ENCODE measurements at regions of chr15 and their contacts with region 1.

Region 1: GRCh38 chr15:81117136-81117535 is 16.9 kb upstream of the CFAP161 start:
- DNase-seq: no peak
- ATAC-seq: no peak
- H3K4me3 Mint-ChIP-seq: no peak overlapping the region
- H3K27ac Mint-ChIP-seq: no peak overlapping the region
- H3K4me1 Mint-ChIP-seq: no peaks in the 10 kb centered on the region
- H3K27me3 Mint-ChIP-seq: peaks cover 57% of the 10 kb centered on the region

Region 2: DNA sequence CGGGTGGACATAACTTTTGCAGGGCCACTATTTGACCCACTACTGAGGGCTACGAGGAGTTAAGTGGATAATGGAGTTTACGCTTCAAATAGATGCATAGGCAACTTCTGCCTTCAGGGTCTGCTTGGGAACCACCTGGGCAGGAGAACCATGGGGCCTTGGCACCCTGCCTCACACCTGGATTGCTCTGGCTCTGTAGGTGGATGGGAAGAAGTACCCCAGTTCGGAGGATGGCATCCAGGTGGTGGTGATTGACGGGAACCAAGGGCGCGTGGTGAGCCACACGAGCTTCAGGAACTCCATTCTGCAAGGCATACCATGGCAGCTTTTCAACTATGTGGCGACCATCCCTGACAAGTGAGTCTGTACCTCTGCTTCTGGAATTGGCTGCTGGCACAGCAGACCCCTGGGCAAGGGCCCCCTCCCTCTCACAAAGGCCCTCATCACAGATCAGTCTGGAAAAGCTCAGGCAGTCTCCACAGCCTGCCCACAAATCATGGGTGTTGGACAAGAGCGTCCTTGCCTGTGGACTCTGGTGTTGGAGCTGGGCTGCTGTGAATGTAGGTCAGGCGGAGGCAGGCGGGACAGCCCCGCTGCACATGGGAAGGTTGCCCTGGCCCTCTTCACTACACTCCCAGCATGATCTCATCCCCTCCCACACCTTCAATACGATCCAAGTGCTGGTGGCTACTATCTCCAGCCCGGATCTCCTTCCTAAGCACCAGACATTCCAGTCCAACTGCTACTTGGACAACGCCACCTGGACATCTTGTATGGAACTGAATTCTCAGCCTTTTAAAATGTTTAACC is 174.2 kb before region 1 on chr15:
- CTCF ChIA-PET with region 1: no interaction called
- DNase-seq: no peak
- ATAC-seq: no peak
- H3K4me3 Mint-ChIP-seq: no peak overlapping the region
- H3K27ac Mint-ChIP-seq: no peak overlapping the region
- H3K4me1 Mint-ChIP-seq: no peaks in the 10 kb centered on the region
- H3K27me3 Mint-ChIP-seq: no peaks in the 10 kb centered on the region

Region 3: GRCh38 chr15:81106560-81106959 is 10.6 kb before region 1 on chr15:
- CTCF ChIA-PET with region 1: interaction called, 10 read pairs
- DNase-seq: peak; percentile 57
- ATAC-seq: peak; percentile 51
- H3K4me3 Mint-ChIP-seq: no peak overlapping the region
- H3K27ac Mint-ChIP-seq: no peak overlapping the region
- H3K4me1 Mint-ChIP-seq: peaks cover 13% of the 10 kb centered on the region
- H3K27me3 Mint-ChIP-seq: peaks cover 59% of the 10 kb centered on the region